IMR-90 (cell line): ENCODE measurements at regions of chr2 and their contacts with region 1.

Region 1: GRCh38 chr2:173184031-173185004 is 108.7 kb downstream of the MAP3K20 start:
- DNase-seq: peak; percentile 100
- ATAC-seq: peak; percentile 95
- H3K4me3 ChIP-seq: no peak overlapping the region
- H3K27ac ChIP-seq: peak overlapping the region; percentile 40
- H3K4me1 ChIP-seq: peaks cover 5% of the 10 kb centered on the region
- H3K27me3 ChIP-seq: no peaks in the 10 kb centered on the region
- CTCF ChIP-seq: no peak
- POLR2A ChIP-seq: no peak; the same call in 1 of the 2 replicates
- RAD21 ChIP-seq: peak; percentile 12; the same call in 1 of the 2 replicates

Region 2: GRCh38 chr2:173149491-173149890 is 34.8 kb before region 1 on chr2:
- CTCF ChIA-PET with region 1: no interaction called
- POLR2A ChIA-PET with region 1: no interaction called
- dilution Hi-C with region 1: no loop called
- in situ Hi-C with region 1: no loop called
- intact Hi-C with region 1: loop called (anchors 5 kb)
- DNase-seq: no peak
- ATAC-seq: no peak
- H3K4me3 ChIP-seq: no peak overlapping the region
- H3K27ac ChIP-seq: 0 out of 2 replicates have a peak overlapping the region, but pooled peaks have one; percentile 20
- H3K4me1 ChIP-seq: peaks cover 25% of the 10 kb centered on the region
- H3K27me3 ChIP-seq: no peaks in the 10 kb centered on the region
- CTCF ChIP-seq: no peak
- POLR2A ChIP-seq: no peak
- RAD21 ChIP-seq: no peak